Pancreas (tissue), 10 donors: ENCODE measurements at regions of chr9 and their contacts with region 1.

Region 1: DNA sequence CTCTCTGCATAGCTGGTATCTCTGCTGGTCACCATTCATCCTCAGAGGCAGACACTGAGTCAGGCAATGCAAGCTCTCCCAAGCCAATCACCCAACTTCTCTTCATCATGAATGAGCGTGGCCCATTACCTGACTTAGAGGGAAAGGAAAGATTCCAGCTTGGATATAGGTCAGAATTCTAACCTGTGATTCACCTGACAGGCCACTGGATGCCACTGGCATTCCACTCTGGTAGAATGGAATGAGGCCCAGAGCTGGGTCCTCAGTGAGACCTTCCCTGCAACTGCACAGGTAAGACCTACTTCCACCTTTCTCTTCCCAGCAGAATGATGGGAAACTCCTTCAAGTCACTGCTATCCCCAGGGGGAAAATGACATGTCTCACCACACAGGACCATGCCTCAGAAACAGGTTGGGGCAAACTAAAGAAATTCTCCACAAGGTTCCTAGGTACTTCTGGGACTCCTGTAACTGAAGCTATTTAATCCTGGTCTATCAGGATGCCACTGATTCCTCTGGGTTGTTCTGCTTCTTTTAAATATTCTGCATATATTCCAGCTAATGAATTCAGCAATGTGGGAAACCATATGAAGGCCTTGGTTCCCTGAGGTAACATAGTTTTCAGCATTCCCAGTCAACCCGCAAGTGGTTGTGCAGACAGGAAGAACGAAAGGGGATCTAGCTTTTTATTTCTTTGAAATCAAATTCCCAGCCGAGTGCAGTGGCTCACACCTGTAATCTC is 62.0 kb downstream of the SUSD1 start:
- DNase-seq: peak in 3 of 6 donors; percentile 27 to 64 (median 28)
- ATAC-seq: peak; percentile 82 to 99 (median 97)
- H3K4me3 ChIP-seq: no peak overlapping the region
- H3K27ac ChIP-seq: no peak overlapping the region
- H3K4me1 ChIP-seq: no peaks in the 10 kb centered on the region
- H3K27me3 ChIP-seq: no peaks in the 10 kb centered on the region
- CTCF ChIP-seq: peak; percentile 9 to 57 (median 36)

Region 2: GRCh38 chr9:112361601-112362000 is 248.5 kb after region 1 on chr9:
- intact Hi-C with region 1: loop called in 1 of 3 experiments (anchors 10 kb)
- DNase-seq: no peak
- ATAC-seq: peak in 3 of 4 donors; percentile 77 to 80 (median 79)
- H3K4me3 ChIP-seq: no peak overlapping the region
- H3K27ac ChIP-seq: no peak overlapping the region
- H3K4me1 ChIP-seq: no peaks in the 10 kb centered on the region
- H3K27me3 ChIP-seq: no peaks in the 10 kb centered on the region
- CTCF ChIP-seq: peak; percentile 13 to 60 (median 40)

Region 3: DNA sequence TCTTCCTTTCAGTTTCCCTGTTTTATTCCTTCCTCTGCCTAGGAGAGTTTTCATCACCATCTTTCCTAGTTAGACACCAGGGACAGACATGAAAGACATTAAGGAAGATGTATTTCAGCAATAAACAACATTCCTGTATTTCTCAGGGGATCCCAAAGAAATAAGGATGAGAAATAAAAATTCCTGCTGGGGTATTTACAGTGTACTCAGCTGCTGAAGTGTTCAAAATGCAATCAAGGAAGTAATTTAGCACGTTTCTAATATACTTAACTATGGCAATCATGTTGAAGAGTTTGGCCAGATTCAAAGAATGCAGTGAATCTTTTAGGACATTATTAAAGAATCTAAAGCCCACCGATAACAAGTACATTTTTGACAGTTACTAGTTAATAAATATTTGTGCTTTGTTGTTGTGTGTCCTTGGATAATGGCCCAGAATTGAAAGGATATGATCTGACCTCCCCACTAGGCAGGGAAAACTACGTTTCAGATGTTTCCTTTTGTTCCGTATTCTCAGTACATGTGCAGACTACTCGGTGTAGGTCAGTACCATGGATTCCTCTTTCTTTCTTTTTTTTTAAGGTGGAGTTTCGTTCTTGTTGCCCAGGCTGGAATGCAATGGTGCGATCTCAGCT is 558.0 kb after region 1 on chr9:
- intact Hi-C with region 1: loop called in 1 of 3 experiments (anchors 10 kb)
- DNase-seq: no peak
- ATAC-seq: no peak
- H3K4me3 ChIP-seq: no peak overlapping the region
- H3K27ac ChIP-seq: no peak overlapping the region
- H3K4me1 ChIP-seq: no peaks in the 10 kb centered on the region
- H3K27me3 ChIP-seq: no peaks in the 10 kb centered on the region
- CTCF ChIP-seq: no peak